Activated CD4-positive, alpha-beta memory T cell treated with anti-CD3 and anti-CD28 coated beads for 36 hours (primary cell): ENCODE measurements at regions of chr19 and their contacts with region 1.

Region 1: GRCh38 chr19:3250675-3251074 is 26.2 kb downstream of the CELF5 start:
- DNase-seq: peak; percentile 58
- H3K4me3 Mint-ChIP-seq: no peak overlapping the region
- H3K27ac Mint-ChIP-seq: no peak overlapping the region
- H3K4me1 Mint-ChIP-seq: no peaks in the 10 kb centered on the region
- H3K27me3 Mint-ChIP-seq: peaks cover 13% of the 10 kb centered on the region

Region 2: GRCh38 chr19:3224346-3225168 is 26.1 kb before region 1 on chr19 and contains the start of gene CELF5:
- CTCF ChIA-PET with region 1: interaction called, 10 read pairs
- POLR2A ChIA-PET with region 1: no interaction called
- intact Hi-C with region 1: no loop called
- DNase-seq: peak; percentile 61
- H3K4me3 Mint-ChIP-seq: no peak within 1 kb of the TSS
- H3K27ac Mint-ChIP-seq: no peak within 1 kb of the TSS
- H3K4me1 Mint-ChIP-seq: no peaks in the 10 kb centered on the region
- H3K27me3 Mint-ChIP-seq: peaks cover 27% of the 10 kb centered on the region
- total RNA-seq, gene CELF5: 0.14 TPM in 1 of 2 experiments, not detected in the other

Region 3: DNA sequence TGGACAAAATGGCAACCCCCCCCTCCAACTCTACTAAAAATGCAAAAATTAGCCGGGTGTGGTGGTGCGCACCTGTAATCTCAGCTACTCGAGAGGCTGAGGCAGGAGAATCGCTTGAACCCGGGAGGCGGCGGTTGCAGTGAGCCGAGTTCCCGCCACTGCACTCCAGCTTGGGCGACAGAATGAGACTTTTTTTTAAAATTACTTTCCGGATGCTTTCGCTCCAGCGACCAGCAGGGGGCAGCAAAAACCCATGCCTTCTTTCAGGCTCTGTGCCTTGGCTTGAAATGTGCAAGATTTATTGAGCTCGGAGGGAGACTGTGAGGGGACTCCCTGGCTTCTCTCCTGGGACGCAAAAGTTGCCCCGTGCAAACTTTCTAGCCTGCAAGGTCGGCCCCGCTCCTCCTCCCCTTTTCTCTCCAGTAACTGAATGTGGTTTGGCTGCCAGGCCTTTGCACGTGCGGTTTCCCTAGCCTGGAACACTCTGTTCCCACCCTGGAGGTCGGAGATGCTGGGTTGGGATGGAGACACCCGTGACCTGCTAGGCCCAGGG is 54.3 kb after region 1 on chr19:
- CTCF ChIA-PET with region 1: no interaction called
- POLR2A ChIA-PET with region 1: no interaction called
- intact Hi-C with region 1: no loop called
- DNase-seq: peak; percentile 84
- H3K4me3 Mint-ChIP-seq: no peak overlapping the region
- H3K27ac Mint-ChIP-seq: no peak overlapping the region
- H3K4me1 Mint-ChIP-seq: no peaks in the 10 kb centered on the region
- H3K27me3 Mint-ChIP-seq: peaks cover 12% of the 10 kb centered on the region